GM10248 (cell line): ENCODE measurements at regions of chr5 and their contacts with region 1.

Region 1: GRCh38 chr5:94820488-94820887 is 202.0 kb downstream of the SLF1 start:
- DNase-seq: no peak
- CTCF ChIP-seq: no peak

Region 2: DNA sequence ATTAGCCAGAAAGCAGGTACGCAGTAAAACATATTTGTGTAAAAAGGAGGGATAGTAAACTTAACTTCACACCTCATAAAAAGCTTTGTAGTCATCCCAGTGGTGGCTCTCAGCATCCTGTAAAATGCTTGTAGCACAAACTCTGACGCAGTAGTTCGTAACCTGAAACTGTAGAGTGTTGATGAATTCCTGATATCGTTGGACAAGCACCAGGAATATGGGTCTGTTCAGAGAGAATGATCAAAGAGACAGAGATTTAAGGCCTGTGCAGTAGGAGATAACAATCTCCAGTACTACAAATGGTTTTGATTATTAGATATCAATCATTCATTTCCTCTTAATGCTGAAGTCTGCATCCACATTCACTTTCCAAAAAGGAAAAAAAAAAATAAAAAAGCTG is 350.6 kb before region 1 on chr5:
- CTCF ChIA-PET with region 1: no interaction called
- POLR2A ChIA-PET with region 1: no interaction called
- DNase-seq: no peak
- CTCF ChIP-seq: no peak

Region 3: DNA sequence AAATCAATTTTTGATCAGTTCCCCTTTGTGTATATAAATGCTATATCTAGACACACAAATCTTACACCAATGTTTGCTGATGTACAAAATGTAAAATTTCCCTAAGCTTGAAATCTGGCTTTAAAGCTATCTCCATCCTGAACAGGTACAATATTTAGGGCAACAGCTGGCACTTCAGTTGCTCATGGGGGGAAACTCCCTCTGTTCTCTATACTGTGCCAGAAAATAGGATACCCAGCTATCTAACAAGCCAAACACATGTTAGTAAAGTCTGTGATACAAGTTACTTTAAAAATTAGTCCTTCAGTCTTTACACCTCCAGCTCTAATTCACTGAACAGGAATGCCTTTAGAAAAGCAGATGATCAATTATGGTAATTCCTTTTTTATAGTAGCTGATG is 10.2 kb before region 1 on chr5:
- CTCF ChIA-PET with region 1: interaction called, 13 read pairs
- POLR2A ChIA-PET with region 1: no interaction called
- DNase-seq: no peak
- CTCF ChIP-seq: no peak

Region 4: GRCh38 chr5:94908889-94909480 is 88.5 kb after region 1 on chr5:
- CTCF ChIA-PET with region 1: no interaction called
- POLR2A ChIA-PET with region 1: no interaction called
- DNase-seq: peak; percentile 22
- CTCF ChIP-seq: peak; percentile 56

Region 5: GRCh38 chr5:94998670-94999069 is 178.2 kb after region 1 on chr5:
- CTCF ChIA-PET with region 1: no interaction called
- POLR2A ChIA-PET with region 1: no interaction called
- DNase-seq: no peak
- CTCF ChIP-seq: no peak